ENCODE measurements at regions of chr4 and their contacts with region 1.

Region 1: GRCh38 chr4:104064646-104065577 is 345.1 kb upstream of the TACR3 start:
- DNase-seq: peak; percentile 7 to 20
- ATAC-seq: peak in 5 of 8 donors; percentile 33 to 74 (median 54)
- H3K4me3 ChIP-seq: no peak overlapping the region
- H3K27ac ChIP-seq: no peak overlapping the region
- H3K4me1 ChIP-seq: no peaks in the 10 kb centered on the region
- H3K27me3 ChIP-seq: no peaks in the 10 kb centered on the region
- CTCF ChIP-seq: peak in 8 of 9 donors; percentile 14 to 66 (median 50)

Region 2: GRCh38 chr4:103934178-103934789 is 130.6 kb before region 1 on chr4:
- intact Hi-C with region 1: no loop called
- DNase-seq: peak in 1 of 2 donors; percentile 14
- ATAC-seq: no peak
- H3K4me3 ChIP-seq: no peak overlapping the region
- H3K27ac ChIP-seq: no peak overlapping the region
- H3K4me1 ChIP-seq: no peaks in the 10 kb centered on the region
- H3K27me3 ChIP-seq: no peaks in the 10 kb centered on the region
- CTCF ChIP-seq: peak; percentile 41 to 83 (median 72)

Region 3: DNA sequence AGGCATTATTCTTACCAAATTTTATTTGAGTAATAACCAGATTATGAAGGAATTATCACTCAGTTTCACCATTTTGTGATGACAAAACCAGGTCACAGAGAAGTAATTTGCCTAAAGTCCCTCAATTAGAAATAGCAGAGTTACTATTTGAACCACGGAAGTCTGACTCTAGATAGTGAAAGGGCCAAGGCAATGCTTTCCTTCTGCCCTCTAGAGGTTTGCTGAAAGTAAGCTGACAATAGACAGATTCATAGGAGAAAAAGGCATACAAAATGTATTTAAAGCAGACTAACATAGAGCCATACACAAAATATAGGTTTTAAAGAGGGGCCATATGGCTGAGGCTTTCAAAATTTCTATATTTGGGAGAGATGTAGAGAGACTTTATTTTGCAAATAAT is 386.7 kb after region 1 on chr4:
- intact Hi-C with region 1: loop called in 1 of 10 experiments (anchors 10 kb)
- DNase-seq: no peak
- ATAC-seq: peak in 2 of 8 donors; percentile 44 to 45
- H3K4me3 ChIP-seq: no peak overlapping the region
- H3K27ac ChIP-seq: no peak overlapping the region
- H3K4me1 ChIP-seq: no peaks in the 10 kb centered on the region
- H3K27me3 ChIP-seq: no peaks in the 10 kb centered on the region
- CTCF ChIP-seq: peak in 7 of 9 donors; percentile 26 to 57 (median 36)

Region 4: DNA sequence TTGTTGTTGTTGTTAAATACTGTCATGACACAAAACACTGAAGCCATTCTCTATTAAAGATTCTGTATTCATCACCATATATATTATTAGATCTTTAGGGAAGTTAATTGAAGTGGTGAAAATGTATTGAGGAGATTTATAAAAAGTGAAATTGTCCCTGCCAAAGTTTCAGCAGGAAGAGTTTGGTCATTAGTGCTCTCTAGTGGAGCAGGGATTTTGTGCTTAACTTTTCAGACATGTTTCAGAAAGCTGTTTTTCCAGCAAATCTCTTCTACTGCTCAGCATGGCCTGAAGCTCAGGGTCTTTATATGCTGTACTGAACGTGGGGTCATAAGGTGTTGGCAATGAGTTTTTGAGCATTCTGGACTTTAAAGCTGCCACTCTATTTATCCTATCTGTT is 466.5 kb after region 1 on chr4:
- intact Hi-C with region 1: loop called in 2 of 10 experiments (anchors 10 kb)
- DNase-seq: no peak
- ATAC-seq: no peak
- H3K4me3 ChIP-seq: no peak overlapping the region
- H3K27ac ChIP-seq: no peak overlapping the region
- H3K4me1 ChIP-seq: peaks cover 0 to 6% (median 0%) of the 10 kb centered on the region in 9 donors
- H3K27me3 ChIP-seq: no peaks in the 10 kb centered on the region
- CTCF ChIP-seq: peak in 4 of 9 donors; percentile 27 to 59 (median 50)

Measured in heart right ventricle (tissue), 16 donors.